Mammary epithelial cell (primary cell): ENCODE measurements at regions of chr22 and their contacts with region 1.

Region 1: DNA sequence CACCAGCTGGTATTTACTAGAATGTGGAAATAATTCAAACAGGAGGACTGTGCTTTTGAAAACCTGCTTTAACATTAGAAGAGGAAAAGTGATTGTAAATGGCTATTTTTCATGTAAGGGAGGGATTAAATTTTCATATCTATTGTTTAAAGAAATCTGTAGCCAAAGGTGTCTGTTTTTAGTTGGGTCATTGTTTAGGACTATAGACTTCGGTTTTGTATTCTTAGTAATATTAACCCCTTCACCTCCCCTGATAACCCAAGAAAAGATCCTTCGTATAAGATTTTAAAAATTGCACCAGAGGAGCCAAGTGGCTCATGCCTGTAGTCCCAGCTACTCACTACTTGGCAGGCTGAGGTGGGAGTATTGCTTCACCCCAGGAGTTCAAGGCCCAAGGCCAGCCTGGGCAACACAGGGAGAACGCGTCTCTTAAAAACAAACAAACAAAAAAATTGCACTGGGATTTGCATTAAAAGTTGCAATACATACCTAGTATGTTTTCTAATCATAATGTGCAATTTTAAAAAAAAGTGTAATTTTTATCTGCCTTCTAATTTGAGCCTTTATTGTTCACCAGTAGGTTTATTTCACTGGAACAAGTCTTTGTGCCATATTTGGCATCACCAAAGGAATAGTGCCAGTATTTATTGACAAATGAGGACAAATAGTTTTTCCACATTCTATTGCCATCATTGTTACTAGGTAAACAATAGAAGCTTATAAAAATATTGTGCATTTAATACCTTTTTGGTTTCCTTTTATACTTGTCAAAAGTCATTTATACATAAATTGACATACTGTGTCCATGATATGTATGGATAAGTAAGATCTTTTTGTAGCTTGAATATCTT is 34.3 kb downstream of the MTMR3 start:
- DNase-seq: no peak
- H3K4me3 ChIP-seq: no peak overlapping the region
- H3K27ac ChIP-seq: no peak overlapping the region
- H3K4me1 ChIP-seq: peaks cover 20% of the 10 kb centered on the region
- H3K27me3 ChIP-seq: no peaks in the 10 kb centered on the region
- CTCF ChIP-seq: no peak

Region 2: GRCh38 chr22:29369460-29369859 is 547.8 kb before region 1 on chr22:
- CTCF ChIA-PET with region 1: no interaction called
- dilution Hi-C with region 1: no loop called
- in situ Hi-C with region 1: no loop called
- intact Hi-C with region 1: no loop called
- DNase-seq: no peak
- H3K4me3 ChIP-seq: no peak overlapping the region
- H3K27ac ChIP-seq: no peak overlapping the region
- H3K4me1 ChIP-seq: no peaks in the 10 kb centered on the region
- H3K27me3 ChIP-seq: no peaks in the 10 kb centered on the region
- CTCF ChIP-seq: no peak

Region 3: GRCh38 chr22:29848111-29848510 is 69.2 kb before region 1 on chr22:
- CTCF ChIA-PET with region 1: no interaction called
- dilution Hi-C with region 1: loop called (anchors 5 kb)
- in situ Hi-C with region 1: no loop called
- intact Hi-C with region 1: no loop called
- DNase-seq: no peak
- H3K4me3 ChIP-seq: no peak overlapping the region
- H3K27ac ChIP-seq: no peak overlapping the region
- H3K4me1 ChIP-seq: peaks cover 5% of the 10 kb centered on the region
- H3K27me3 ChIP-seq: no peaks in the 10 kb centered on the region
- CTCF ChIP-seq: no peak

Region 4: DNA sequence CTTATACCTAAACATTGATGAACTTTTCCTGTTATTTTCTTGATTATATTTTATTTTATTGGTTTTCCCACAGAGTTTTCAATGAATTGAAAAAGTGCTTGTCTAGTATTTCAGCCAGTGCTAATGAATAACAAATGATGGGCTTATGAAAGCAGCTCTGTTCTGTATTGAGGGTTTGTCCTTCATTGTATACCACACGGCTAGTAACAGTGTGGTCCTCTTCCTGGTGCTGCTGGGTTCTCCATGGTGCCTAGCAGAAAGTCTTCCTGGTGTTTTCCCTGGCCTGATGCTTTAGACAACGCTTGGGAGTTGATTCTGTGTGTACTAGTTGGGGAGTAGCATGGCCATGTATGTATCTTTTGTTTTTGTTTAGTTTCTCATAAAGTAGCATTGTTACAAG is 54.8 kb after region 1 on chr22:
- CTCF ChIA-PET with region 1: no interaction called
- dilution Hi-C with region 1: loop called (anchors 5 kb)
- in situ Hi-C with region 1: no loop called
- intact Hi-C with region 1: no loop called
- DNase-seq: no peak
- H3K4me3 ChIP-seq: no peak overlapping the region
- H3K27ac ChIP-seq: no peak overlapping the region
- H3K4me1 ChIP-seq: no peaks in the 10 kb centered on the region
- H3K27me3 ChIP-seq: no peaks in the 10 kb centered on the region
- CTCF ChIP-seq: no peak